Activated T-helper 2 cell treated with anti-CD3 and anti-CD28 coated beads, Interferon-gamma antibody, Interleukin-2, Interleukin-4, amounts not matched to agents 10 μg/mL and 5 μg/mL and 100 μg/mL, durations not matched to agents 14 hours and 24 hours and 36 hours (primary cell): ENCODE measurements at regions of chr4 and their contacts with region 1.

Region 1: GRCh38 chr4:7886007-7886973 is 53.4 kb downstream of the AFAP1 start:
- DNase-seq: no peak
- H3K4me3 Mint-ChIP-seq: no peak overlapping the region
- H3K27ac Mint-ChIP-seq: no peak overlapping the region
- H3K4me1 Mint-ChIP-seq: peaks cover 6% of the 10 kb centered on the region
- H3K27me3 Mint-ChIP-seq: no peaks in the 10 kb centered on the region

Region 2: GRCh38 chr4:7933651-7934510 is 47.6 kb after region 1 on chr4:
- intact Hi-C with region 1: loop called (anchors 5 kb)
- DNase-seq: no peak
- H3K4me3 Mint-ChIP-seq: no peak overlapping the region
- H3K27ac Mint-ChIP-seq: no peak overlapping the region
- H3K4me1 Mint-ChIP-seq: peaks cover 23% of the 10 kb centered on the region
- H3K27me3 Mint-ChIP-seq: peaks cover 8% of the 10 kb centered on the region